ENCODE measurements at regions of chr1 and their contacts with region 1.

Region 1: DNA sequence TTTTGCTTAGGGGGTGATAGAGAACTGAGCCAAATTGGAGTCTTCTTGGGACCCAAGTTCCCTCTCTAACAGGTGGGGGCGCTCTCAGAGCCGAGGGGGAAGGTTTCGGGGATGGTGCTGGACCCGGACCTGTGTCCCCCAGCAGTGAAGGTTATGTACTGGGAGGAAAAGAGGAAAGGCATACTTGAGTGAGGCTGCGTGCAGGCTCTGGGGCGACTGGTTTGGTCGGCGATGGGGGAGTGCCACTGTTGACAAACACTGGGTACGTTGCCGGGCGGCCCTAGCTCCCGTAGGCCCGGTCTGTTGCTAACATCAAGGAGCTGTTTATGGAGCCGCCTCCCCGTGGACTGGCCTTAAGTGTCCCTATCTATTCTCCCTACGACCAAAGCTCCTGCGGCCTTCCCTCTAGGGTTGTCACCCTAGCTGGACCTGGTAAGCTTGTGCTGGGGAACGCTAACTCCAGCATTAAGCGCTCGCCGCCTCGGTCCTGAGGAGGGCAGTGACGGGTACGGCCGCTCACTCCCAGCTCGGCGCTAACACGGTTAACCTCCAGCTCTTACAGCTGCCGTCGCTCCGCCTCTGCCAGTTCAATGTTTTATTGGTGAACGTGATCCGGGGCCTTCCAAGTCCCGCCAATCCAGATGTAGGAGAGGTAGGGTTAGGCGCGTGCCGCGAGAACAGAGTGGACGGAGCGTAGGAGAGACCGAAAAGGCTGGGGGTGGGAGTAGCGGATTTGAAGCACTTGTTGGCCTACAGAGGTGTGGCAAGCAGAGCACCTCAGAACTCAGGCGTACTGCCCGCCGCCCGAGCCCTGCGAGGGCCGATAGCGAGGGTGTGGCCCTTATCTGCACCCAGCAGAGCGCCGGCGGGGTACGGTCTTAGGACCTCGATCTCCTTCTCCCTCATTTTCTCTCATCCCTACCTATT is at the start of gene PPOX:
- DNase-seq: peak; percentile 82
- ATAC-seq: peak; percentile 94
- H3K4me3 Mint-ChIP-seq: peak within 1 kb of the TSS; percentile 88
- H3K27ac Mint-ChIP-seq: peak within 1 kb of the TSS; percentile 98
- H3K4me1 Mint-ChIP-seq: peaks cover 48% of the 10 kb centered on the region
- H3K27me3 Mint-ChIP-seq: no peaks in the 10 kb centered on the region
- CTCF ChIP-seq: no peak
- total RNA-seq, gene PPOX: 31.5 and 40.7 TPM in 2 replicates

Region 2: GRCh38 chr1:160078512-160079195 is 1087.4 kb before region 1 on chr1:
- CTCF ChIA-PET with region 1: no interaction called
- POLR2A ChIA-PET with region 1: interaction called, 14 read pairs
- intact Hi-C with region 1: no loop called
- DNase-seq: peak; percentile 33
- ATAC-seq: peak; percentile 81
- H3K4me3 Mint-ChIP-seq: no peak overlapping the region
- H3K27ac Mint-ChIP-seq: no peak overlapping the region
- H3K4me1 Mint-ChIP-seq: peaks cover 4% of the 10 kb centered on the region
- H3K27me3 Mint-ChIP-seq: peaks cover 53% of the 10 kb centered on the region
- CTCF ChIP-seq: no peak

Region 3: GRCh38 chr1:160987359-160988062 is 178.5 kb before region 1 on chr1:
- CTCF ChIA-PET with region 1: no interaction called
- POLR2A ChIA-PET with region 1: no interaction called
- intact Hi-C with region 1: no loop called
- DNase-seq: no peak
- ATAC-seq: no peak
- H3K4me3 Mint-ChIP-seq: no peak overlapping the region
- H3K27ac Mint-ChIP-seq: no peak overlapping the region
- H3K4me1 Mint-ChIP-seq: peaks cover 5% of the 10 kb centered on the region
- H3K27me3 Mint-ChIP-seq: peaks cover 3% of the 10 kb centered on the region
- CTCF ChIP-seq: no peak

Region 4: GRCh38 chr1:161153679-161154426 is 12.2 kb before region 1 on chr1 and contains the start of gene UFC1:
- CTCF ChIA-PET with region 1: interaction called, 12 read pairs
- POLR2A ChIA-PET with region 1: interaction called, 34 read pairs
- intact Hi-C with region 1: loop called (anchors 1 kb)
- DNase-seq: peak; percentile 66
- ATAC-seq: peak; percentile 94
- H3K4me3 Mint-ChIP-seq: peak within 1 kb of the TSS; percentile 99
- H3K27ac Mint-ChIP-seq: peak within 1 kb of the TSS; percentile 100
- H3K4me1 Mint-ChIP-seq: peaks cover 21% of the 10 kb centered on the region
- H3K27me3 Mint-ChIP-seq: no peaks in the 10 kb centered on the region
- CTCF ChIP-seq: no peak
- total RNA-seq, gene UFC1: 107 and 127 TPM in 2 replicates

Region 5: DNA sequence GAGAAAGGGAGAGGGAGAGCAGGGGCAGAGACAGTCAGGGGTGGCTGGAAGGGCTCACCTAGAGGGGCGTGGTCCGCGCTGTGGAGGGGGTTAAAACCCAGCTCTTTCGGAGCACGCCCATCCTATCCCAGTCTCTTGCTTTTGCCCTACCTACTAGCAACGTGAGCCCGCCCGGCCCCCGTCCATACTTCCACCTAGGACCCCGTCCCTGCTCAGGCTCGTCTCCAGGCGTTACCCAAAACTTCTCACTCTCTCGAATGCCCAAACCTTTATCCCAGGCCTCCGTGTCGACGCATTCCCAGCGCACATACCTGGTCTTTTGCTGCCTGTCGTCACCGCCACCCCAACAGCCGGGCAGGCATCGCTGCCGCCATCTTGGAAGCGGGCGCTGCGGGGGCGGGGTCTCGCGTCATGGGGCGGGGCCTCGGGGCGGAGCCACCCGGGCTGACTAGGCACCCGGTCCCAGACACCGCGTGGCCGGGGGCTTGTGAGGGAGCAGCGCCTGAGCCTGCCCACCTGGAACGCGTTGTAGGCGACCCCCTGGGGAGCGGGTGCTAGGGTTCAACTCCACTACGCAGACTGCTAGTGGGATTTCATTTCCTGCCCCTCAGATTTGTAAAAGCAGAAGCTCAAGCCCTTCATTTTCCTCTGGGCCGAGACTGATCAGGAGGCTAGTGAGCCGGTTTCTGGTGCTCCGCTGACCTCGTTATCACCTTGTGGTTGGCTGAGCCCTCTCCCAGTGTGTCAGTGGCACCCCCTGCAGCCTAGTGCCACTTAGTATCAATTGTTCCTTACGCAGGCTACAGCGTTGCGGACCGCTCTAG is 11.3 kb after region 1 on chr1 and contains the start of gene B4GALT3:
- CTCF ChIA-PET with region 1: interaction called, 18 read pairs
- POLR2A ChIA-PET with region 1: interaction called, 49 read pairs
- intact Hi-C with region 1: loop called (anchors 1 kb)
- DNase-seq: peak; percentile 99
- ATAC-seq: peak; percentile 90
- H3K4me3 Mint-ChIP-seq: peak within 1 kb of the TSS; percentile 99
- H3K27ac Mint-ChIP-seq: peak within 1 kb of the TSS; percentile 99
- H3K4me1 Mint-ChIP-seq: peaks cover 64% of the 10 kb centered on the region
- H3K27me3 Mint-ChIP-seq: no peaks in the 10 kb centered on the region
- CTCF ChIP-seq: no peak
- total RNA-seq, gene B4GALT3: 40.7 and 41.7 TPM in 2 replicates

Region 6: GRCh38 chr1:161185282-161185682 is 19.3 kb after region 1 on chr1:
- CTCF ChIA-PET with region 1: interaction called, 9 read pairs
- POLR2A ChIA-PET with region 1: interaction called, 49 read pairs
- intact Hi-C with region 1: loop called (anchors 1 kb)
- DNase-seq: peak; percentile 41
- ATAC-seq: peak; percentile 66
- H3K4me3 Mint-ChIP-seq: peak overlapping the region; percentile 77
- H3K27ac Mint-ChIP-seq: peak overlapping the region; percentile 93
- H3K4me1 Mint-ChIP-seq: peaks cover 85% of the 10 kb centered on the region
- H3K27me3 Mint-ChIP-seq: no peaks in the 10 kb centered on the region
- CTCF ChIP-seq: no peak

Region 7: GRCh38 chr1:161382214-161383019 is 216.4 kb after region 1 on chr1:
- CTCF ChIA-PET with region 1: interaction called, 8 read pairs
- POLR2A ChIA-PET with region 1: interaction called, 10 read pairs
- intact Hi-C with region 1: loop called (anchors 1 kb)
- DNase-seq: no peak
- ATAC-seq: peak; percentile 90
- H3K4me3 Mint-ChIP-seq: no peak overlapping the region
- H3K27ac Mint-ChIP-seq: no peak overlapping the region
- H3K4me1 Mint-ChIP-seq: peaks cover 7% of the 10 kb centered on the region
- H3K27me3 Mint-ChIP-seq: no peaks in the 10 kb centered on the region
- CTCF ChIP-seq: no peak